HCT116 (cell line): ENCODE measurements at regions of chr10 and their contacts with region 1.

Region 1: GRCh38 chr10:102072673-102073527 is 7.8 kb downstream of the HPS6 start:
- DNase-seq: peak; percentile 87
- ATAC-seq: peak; percentile 96
- H3K4me3 ChIP-seq: no peak overlapping the region
- H3K27ac ChIP-seq: no peak overlapping the region
- H3K4me1 ChIP-seq: peaks cover 5 to 6% of the 10 kb centered on the region in 2 experiments; a peak in 2 of 4 replicates
- H3K27me3 ChIP-seq: peaks cover under 1% of the 10 kb centered on the region; the same call in 1 of the 2 replicates
- CTCF ChIP-seq: peak in 2 of 3 experiments; percentile 100; a peak in 4 of 6 replicates
- POLR2A ChIP-seq: no peak
- RAD21 ChIP-seq: no peak

Region 2: DNA sequence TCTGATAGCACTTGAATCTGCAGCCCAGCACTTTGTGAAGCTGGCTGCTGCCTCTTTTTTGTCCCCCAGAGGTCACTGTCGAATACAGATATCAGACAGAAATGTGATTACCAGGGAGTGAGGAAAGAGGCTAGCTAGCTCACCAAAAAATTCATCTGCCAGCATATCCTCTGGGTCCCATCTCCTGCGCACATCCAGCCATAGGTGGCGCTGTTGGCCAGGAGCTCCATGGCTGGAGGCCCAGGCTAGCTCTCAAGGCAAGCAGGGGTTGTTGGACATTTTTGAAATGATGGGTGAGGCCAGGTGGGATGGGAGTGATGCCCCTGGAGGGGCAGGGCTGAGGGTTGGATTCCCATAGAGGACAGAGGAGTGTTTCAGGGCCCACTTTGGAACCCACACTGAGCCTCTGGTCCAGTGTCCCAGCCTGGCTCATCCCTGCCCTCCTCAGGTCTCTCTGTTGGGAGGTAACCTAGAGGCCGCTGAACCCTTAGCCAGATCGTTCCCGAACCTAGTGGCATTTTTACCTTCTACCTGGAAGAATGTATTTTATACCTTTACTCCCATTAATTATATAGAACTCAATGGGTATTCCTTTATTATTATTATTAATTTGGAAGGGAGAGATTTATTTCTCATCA is 470.0 kb before region 1 on chr10:
- CTCF ChIA-PET with region 1: interaction called, 17 read pairs
- POLR2A ChIA-PET with region 1: no interaction called
- RAD21 ChIA-PET with region 1: no interaction called
- intact Hi-C with region 1: loop called (anchors 1 kb)
- DNase-seq: peak; percentile 71
- ATAC-seq: peak; percentile 99
- H3K4me3 ChIP-seq: no peak overlapping the region
- H3K27ac ChIP-seq: no peak overlapping the region
- H3K4me1 ChIP-seq: no peaks in the 10 kb centered on the region
- H3K27me3 ChIP-seq: no peaks in the 10 kb centered on the region
- CTCF ChIP-seq: peak; percentile 97 to 99 (median 99)
- POLR2A ChIP-seq: no peak
- RAD21 ChIP-seq: peak; percentile 96

Region 3: GRCh38 chr10:101858723-101859500 is 214.0 kb before region 1 on chr10:
- CTCF ChIA-PET with region 1: no interaction called
- POLR2A ChIA-PET with region 1: no interaction called
- RAD21 ChIA-PET with region 1: no interaction called
- intact Hi-C with region 1: no loop called
- DNase-seq: no peak
- ATAC-seq: no peak
- H3K4me3 ChIP-seq: no peak overlapping the region
- H3K27ac ChIP-seq: no peak overlapping the region
- H3K4me1 ChIP-seq: peaks cover 0 to 6% of the 10 kb centered on the region in 2 experiments; a peak in 1 of 4 replicates
- H3K27me3 ChIP-seq: no peaks in the 10 kb centered on the region
- CTCF ChIP-seq: no peak
- POLR2A ChIP-seq: no peak
- RAD21 ChIP-seq: no peak

Region 4: DNA sequence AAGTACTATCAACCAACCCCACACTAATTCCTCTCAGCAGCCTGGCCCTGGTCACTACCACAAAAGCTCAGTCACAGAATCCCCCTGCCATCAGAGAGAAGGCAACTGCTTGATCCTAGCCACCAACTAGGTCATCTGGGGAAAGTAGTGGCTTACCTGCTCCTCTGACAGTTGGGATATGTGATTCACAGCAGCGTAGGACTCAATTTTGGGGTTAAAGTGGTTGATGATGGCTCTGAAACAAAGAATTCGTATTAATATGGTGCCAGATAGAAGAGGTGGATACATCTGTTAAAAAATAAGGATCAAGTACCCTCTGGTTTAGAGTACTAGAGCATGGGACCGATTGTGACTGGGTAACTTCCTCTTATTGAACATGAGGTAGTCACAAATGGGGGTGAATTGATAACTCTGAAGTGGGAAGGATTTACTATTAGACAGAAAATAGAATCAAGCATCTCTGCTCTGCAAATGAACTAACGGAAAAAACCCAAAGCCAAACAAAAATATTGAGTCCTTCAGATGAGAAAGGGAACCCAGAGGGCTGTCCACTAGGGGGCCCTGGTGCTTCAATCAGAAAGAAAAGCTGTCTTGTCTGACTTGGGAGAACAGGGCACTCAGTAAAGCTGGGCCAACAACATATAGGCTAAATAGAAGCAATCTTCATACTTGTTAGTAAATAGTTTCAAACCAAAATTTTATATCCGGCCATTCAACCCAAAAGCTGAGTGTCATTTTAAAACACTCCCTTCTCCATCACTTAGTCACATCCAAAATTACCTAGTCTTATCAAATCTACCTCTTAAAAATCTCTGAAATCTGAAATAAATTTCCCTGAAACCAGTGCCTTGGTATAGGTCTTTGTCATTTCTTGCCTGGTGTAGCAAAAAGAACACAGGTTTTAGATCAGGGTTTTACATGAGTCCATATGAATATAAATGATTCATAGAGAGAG is 183.4 kb before region 1 on chr10:
- CTCF ChIA-PET with region 1: interaction called, 17 read pairs
- POLR2A ChIA-PET with region 1: interaction called, 3 read pairs
- RAD21 ChIA-PET with region 1: interaction called, 4 to 5 read pairs
- intact Hi-C with region 1: loop called (anchors 1 kb)
- DNase-seq: peak; percentile 69
- ATAC-seq: peak; percentile 90
- H3K4me3 ChIP-seq: no peak overlapping the region
- H3K27ac ChIP-seq: no peak overlapping the region
- H3K4me1 ChIP-seq: peaks cover 4 to 18% of the 10 kb centered on the region in 2 experiments; a peak in 3 of 4 replicates
- H3K27me3 ChIP-seq: no peaks in the 10 kb centered on the region
- CTCF ChIP-seq: peak; percentile 93 to 99 (median 99)
- POLR2A ChIP-seq: no peak
- RAD21 ChIP-seq: peak; percentile 96

Region 5: GRCh38 chr10:102055647-102056419 is 17.1 kb before region 1 on chr10 and contains the start of gene ARMH3:
- CTCF ChIA-PET with region 1: interaction called, 27 read pairs
- POLR2A ChIA-PET with region 1: interaction called, 10 read pairs
- RAD21 ChIA-PET with region 1: interaction called in 1 of 2 experiments, 3 read pairs
- intact Hi-C with region 1: no loop called
- DNase-seq: peak; percentile 99
- ATAC-seq: peak; percentile 85
- H3K4me3 ChIP-seq: peak within 1 kb of the TSS; percentile 77 to 91
- H3K27ac ChIP-seq: peak within 1 kb of the TSS; percentile 90
- H3K4me1 ChIP-seq: peaks cover 40 to 52% of the 10 kb centered on the region in 2 experiments
- H3K27me3 ChIP-seq: no peaks in the 10 kb centered on the region
- CTCF ChIP-seq: no peak
- POLR2A ChIP-seq: peak; percentile 84
- RAD21 ChIP-seq: no peak
- total RNA-seq, gene ARMH3: 30.4 TPM

Region 6: GRCh38 chr10:102085336-102085735 is 12.4 kb after region 1 on chr10:
- CTCF ChIA-PET with region 1: interaction called, 13 read pairs
- POLR2A ChIA-PET with region 1: no interaction called
- RAD21 ChIA-PET with region 1: no interaction called
- intact Hi-C with region 1: no loop called
- DNase-seq: no peak
- ATAC-seq: no peak
- H3K4me3 ChIP-seq: no peak overlapping the region
- H3K27ac ChIP-seq: no peak overlapping the region
- H3K4me1 ChIP-seq: no peaks in the 10 kb centered on the region
- H3K27me3 ChIP-seq: no peaks in the 10 kb centered on the region
- CTCF ChIP-seq: no peak
- POLR2A ChIP-seq: no peak
- RAD21 ChIP-seq: no peak

Region 7: DNA sequence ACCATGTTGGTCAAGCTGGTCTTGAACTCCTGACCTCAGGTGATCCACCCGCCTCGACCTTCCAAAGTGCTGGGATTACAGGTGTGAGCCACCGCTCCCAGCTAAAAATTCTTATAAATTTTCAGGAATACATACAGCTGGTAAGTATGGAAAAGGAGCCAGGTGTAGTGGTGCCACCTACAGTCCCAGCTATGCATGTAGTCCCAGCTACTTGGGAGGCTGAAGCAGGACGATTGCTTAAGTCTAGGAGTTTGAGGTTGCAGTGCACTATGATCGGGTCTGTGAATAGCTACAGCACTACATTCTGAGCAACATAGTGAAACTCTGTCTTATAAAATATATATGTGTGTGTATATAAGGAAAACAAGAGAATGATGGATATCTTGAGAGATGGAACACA is 28.3 kb after region 1 on chr10:
- CTCF ChIA-PET with region 1: interaction called, 27 read pairs
- POLR2A ChIA-PET with region 1: no interaction called
- RAD21 ChIA-PET with region 1: no interaction called
- intact Hi-C with region 1: no loop called
- DNase-seq: peak; percentile 39
- ATAC-seq: peak; percentile 93
- H3K4me3 ChIP-seq: no peak overlapping the region
- H3K27ac ChIP-seq: no peak overlapping the region
- H3K4me1 ChIP-seq: no peaks in the 10 kb centered on the region
- H3K27me3 ChIP-seq: no peaks in the 10 kb centered on the region
- CTCF ChIP-seq: peak; percentile 52 to 71 (median 53); a peak in 5 of 6 replicates
- POLR2A ChIP-seq: no peak
- RAD21 ChIP-seq: peak; percentile 69